ENCODE measurements at regions of chr1 and their contacts with region 1.

Region 1: DNA sequence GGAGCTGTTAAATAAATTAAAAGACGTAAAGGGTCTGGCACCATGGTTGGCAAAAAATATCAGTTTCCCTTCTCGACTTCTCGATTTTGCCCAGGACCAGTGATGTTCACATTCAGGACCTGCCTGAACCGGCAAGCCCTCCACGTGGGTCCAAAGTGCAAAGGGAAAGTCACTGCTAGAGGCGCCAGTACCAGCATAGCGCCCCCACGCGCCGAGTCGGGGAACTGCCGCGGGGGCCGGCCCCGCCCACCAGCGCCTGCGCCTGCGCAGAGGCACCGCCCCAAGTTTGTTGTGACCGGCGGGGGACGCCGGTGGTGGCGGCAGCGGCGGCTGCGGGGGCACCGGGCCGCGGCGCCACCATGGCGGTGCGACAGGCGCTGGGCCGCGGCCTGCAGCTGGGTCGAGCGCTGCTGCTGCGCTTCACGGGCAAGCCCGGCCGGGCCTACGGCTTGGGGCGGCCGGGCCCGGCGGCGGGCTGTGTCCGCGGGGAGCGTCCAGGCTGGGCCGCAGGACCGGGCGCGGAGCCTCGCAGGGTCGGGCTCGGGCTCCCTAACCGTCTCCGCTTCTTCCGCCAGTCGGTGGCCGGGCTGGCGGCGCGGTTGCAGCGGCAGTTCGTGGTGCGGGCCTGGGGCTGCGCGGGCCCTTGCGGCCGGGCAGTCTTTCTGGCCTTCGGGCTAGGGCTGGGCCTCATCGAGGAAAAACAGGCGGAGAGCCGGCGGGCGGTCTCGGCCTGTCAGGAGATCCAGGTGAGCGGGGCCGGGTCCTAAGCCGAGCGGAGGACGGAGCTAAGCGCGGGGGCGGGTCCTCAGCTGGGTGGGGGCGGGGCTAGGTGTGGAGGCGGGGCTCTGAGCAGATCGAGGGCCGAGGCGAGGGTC is at the start of gene PINK1:
- DNase-seq: peak; percentile 52 to 87
- H3K4me3 ChIP-seq: peak within 1 kb of the TSS; percentile 58
- H3K27ac ChIP-seq: 0 out of 2 replicates have a peak within 1 kb of the TSS, but pooled peaks have one; percentile 26
- H3K4me1 ChIP-seq: peaks cover 19% of the 10 kb centered on the region
- H3K27me3 ChIP-seq: no peaks in the 10 kb centered on the region
- CTCF ChIP-seq: peak; percentile 91
- total RNA-seq, gene PINK1: 46.5 and 48.6 TPM in 2 replicates

Region 2: DNA sequence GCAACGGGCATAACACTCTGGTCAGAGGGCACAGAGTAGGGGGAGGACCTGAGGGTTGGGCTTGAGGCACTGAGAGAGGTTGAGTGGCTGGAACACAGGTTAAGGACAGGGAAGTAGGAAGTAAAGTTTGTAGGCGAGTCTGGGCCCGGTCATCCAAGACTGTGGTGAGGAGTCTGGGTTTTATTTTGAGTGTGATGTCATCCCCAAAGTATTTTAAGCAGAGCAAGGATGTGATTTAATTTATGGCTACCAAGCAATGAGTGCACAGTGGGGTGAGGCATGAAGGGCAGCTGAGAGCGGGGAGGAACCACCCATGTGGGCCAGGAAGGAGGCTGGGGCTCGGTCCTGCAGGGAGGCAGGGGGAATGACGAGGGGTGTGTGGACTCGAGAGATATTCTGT is 353.9 kb before region 1 on chr1:
- CTCF ChIA-PET with region 1: no interaction called
- POLR2A ChIA-PET with region 1: interaction called, 10 read pairs
- intact Hi-C with region 1: no loop called
- DNase-seq: peak; percentile 51 to 89
- H3K4me3 ChIP-seq: no peak overlapping the region
- H3K27ac ChIP-seq: peak overlapping the region; percentile 68
- H3K4me1 ChIP-seq: peaks cover 36% of the 10 kb centered on the region
- H3K27me3 ChIP-seq: no peaks in the 10 kb centered on the region
- CTCF ChIP-seq: no peak

Region 3: DNA sequence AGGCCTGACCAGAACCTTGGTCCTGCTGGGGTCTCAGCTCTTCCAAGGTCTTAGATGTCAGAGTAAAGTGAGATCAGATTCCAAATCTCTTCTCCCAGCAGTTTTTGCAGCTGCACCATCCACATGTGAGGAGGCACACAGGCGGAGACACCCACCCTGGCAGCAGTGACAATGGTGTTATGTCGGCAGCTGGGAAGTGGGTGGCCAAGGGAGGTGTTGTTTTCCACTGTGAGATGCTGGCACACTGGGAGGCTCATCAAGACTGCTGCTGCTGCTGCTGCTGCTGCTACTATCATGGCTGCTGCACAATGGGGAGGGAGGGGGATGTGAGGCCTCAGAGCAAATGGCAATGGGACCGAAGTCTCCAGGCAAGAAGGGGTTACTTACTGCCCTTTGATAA is 171.0 kb before region 1 on chr1:
- CTCF ChIA-PET with region 1: no interaction called
- POLR2A ChIA-PET with region 1: interaction called, 23 read pairs
- intact Hi-C with region 1: no loop called
- DNase-seq: no peak
- H3K4me3 ChIP-seq: no peak overlapping the region
- H3K27ac ChIP-seq: no peak overlapping the region
- H3K4me1 ChIP-seq: no peaks in the 10 kb centered on the region
- H3K27me3 ChIP-seq: no peaks in the 10 kb centered on the region
- CTCF ChIP-seq: no peak

Region 4: GRCh38 chr1:20511518-20512370 is 121.7 kb before region 1 on chr1:
- CTCF ChIA-PET with region 1: interaction called, 16 read pairs
- POLR2A ChIA-PET with region 1: interaction called, 6 read pairs
- intact Hi-C with region 1: no loop called
- DNase-seq: peak in 1 of 2 experiments; percentile 70
- H3K4me3 ChIP-seq: no peak overlapping the region
- H3K27ac ChIP-seq: peak overlapping the region; percentile 64
- H3K4me1 ChIP-seq: peaks cover 13% of the 10 kb centered on the region
- H3K27me3 ChIP-seq: no peaks in the 10 kb centered on the region
- CTCF ChIP-seq: no peak

Region 5: DNA sequence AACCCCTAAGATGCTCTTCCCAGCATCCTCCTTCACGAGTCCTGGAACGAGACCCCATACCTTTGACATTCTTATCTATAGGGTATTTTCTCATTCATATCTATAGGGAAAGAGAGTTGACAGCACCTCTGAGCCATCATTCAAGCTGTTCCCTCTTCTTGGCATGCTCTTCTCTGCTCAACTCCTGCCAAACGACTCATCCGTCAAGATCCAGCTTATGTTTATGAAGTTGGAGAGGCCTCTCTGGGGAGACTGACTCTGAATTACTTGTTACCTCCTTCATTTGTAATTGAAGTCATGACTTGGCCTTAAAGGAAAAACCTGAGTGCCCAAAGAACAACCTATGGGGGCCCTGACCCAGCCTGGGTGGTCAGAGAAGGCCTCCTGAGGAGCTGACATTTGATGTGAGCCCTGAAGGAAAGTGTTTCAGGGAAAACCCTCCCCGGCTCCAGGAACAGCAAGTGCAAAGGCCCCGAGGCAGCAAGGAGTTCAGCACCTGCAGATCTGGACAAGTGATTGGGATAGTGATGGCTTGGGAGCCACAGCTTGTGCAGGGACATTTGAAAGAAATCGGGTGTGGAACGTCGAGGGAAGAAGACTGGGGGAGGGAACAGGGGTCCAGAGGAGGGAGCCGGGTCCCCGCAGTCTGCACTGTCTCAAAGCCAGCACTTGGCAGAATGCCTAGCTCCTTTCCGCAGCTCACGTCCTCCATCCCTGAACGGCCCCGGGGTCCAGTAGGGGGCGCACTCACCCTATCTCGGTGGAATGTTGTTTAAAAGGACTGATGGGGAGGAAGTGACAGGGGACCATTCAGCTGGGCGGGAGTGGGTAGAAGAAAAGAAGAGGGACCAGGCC is 58.5 kb before region 1 on chr1:
- CTCF ChIA-PET with region 1: interaction called, 5 read pairs
- POLR2A ChIA-PET with region 1: no interaction called
- intact Hi-C with region 1: loop called (anchors 5 kb)
- DNase-seq: no peak
- H3K4me3 ChIP-seq: no peak overlapping the region
- H3K27ac ChIP-seq: no peak overlapping the region
- H3K4me1 ChIP-seq: peaks cover 34% of the 10 kb centered on the region
- H3K27me3 ChIP-seq: no peaks in the 10 kb centered on the region
- CTCF ChIP-seq: peak; percentile 26; the same call in 1 of the 2 replicates

Measured in PC-9 (cell line).